ENCODE measurements at regions of chr22 and their contacts with region 1.

Region 1: DNA sequence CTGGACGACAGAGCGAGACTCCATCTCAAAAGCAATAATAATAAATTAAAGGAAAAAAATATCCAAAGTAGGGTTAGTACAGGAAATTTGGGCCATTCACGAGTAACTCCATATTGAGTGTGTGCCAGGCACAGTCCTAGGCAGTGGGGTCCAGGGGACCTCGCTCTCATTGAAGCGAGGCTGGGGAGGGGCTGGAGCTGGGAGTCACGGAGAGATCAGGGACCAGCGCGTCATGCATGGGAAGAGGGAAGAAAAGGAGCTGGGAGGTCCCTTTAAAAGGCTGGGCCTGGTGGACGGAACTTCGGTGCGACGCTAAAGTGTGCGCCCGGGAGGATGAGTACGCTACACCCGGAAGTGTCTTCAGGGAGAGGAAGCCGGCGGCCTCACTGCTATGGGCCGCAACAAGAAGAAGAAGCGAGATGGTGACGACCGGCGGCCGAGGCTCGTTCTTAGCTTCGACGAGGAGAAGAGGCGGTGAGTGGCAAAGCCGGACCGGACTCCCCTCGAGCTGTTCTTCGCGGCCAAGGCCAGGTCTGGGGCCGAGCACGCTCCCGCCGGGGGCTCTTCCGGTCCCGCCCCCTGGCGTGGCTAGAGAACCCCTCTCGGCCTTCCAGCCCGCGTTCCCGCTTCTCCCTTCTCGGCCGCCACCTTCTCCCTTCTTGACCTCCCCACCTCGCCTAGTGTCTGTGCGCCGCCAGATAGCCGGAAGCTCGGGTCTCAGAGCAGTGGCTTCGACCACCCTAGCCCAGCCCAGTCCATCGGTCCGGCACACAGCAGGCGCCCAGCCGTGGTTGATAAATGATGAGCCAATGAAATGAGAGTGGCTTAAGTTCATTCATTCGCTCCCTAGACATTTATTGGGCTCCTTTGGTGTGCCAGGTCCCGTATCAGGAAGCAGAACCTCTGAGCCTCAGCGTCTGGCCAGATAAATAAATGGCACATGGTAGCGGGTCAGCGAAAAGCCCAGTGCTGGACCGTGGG is at the start of gene NOL12:
- H3K4me3 ChIP-seq: peak within 1 kb of the TSS; percentile 77
- H3K27ac ChIP-seq: peak within 1 kb of the TSS; percentile 81
- H3K4me1 ChIP-seq: peaks cover 2% of the 10 kb centered on the region; the same call in 1 of the 2 replicates
- CTCF ChIP-seq: peak; percentile 12; the same call in 1 of the 2 replicates

Region 2: DNA sequence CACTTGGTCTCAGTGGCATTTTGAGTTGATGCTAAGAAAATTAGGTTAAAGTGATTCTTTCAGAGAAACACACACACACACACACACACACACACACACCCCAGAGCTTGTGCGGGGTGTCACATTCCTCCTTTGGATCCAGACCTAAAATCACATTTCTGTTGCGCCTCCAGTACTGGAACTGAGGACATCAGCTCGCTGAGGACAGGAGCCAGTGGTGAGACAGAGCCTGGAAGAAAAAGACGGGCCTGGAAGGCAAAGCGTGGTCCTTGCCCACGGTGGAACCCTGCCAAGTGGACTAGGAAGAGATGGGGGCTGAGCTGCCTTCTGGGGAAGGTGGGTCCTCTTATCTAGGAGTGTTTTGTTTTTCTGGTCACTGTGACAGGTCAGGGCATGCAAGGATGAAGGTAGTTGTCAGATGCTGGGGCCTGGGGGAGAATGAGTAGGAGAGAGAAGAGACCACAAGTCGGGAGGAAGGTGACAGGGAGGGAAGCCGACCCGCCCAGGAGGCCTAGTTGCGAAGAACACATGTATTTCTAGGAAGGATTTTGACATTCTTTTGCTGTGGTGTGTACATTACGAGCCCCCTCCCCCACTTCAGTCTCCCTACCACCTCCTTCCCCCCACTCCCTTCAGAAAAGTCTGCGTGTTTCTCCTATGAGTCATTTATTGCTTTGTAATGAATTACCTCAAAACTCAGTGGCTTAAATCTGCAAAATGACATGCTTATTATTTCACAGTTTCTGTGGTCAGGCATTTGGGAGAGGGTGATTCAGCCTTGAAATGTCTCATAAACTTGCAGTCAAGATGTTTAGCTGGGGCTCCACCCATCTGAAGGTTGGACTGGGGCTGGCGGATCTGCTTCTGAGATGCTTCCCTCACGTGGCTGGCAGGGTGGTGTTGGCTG is 254.2 kb before region 1 on chr22:
- CTCF ChIA-PET with region 1: no interaction called
- POLR2A ChIA-PET with region 1: no interaction called
- H3K4me3 ChIP-seq: no peak overlapping the region
- H3K27ac ChIP-seq: peak overlapping the region; percentile 10
- H3K4me1 ChIP-seq: no peaks in the 10 kb centered on the region
- CTCF ChIP-seq: no peak

Region 3: GRCh38 chr22:37633625-37634416 is 52.5 kb before region 1 on chr22:
- CTCF ChIA-PET with region 1: interaction called, 353 read pairs
- POLR2A ChIA-PET with region 1: interaction called, 3 read pairs
- H3K4me3 ChIP-seq: no peak overlapping the region
- H3K27ac ChIP-seq: peak overlapping the region; percentile 7; the same call in 1 of the 2 replicates
- H3K4me1 ChIP-seq: peaks cover 13% of the 10 kb centered on the region
- CTCF ChIP-seq: peak; percentile 61

Region 4: GRCh38 chr22:37696657-37697537 is 10.6 kb after region 1 on chr22 and contains the start of gene TRIOBP:
- CTCF ChIA-PET with region 1: interaction called, 13 read pairs
- POLR2A ChIA-PET with region 1: interaction called, 11 read pairs
- H3K4me3 ChIP-seq: no peak within 1 kb of the TSS
- H3K27ac ChIP-seq: no peak within 1 kb of the TSS
- H3K4me1 ChIP-seq: peaks cover 6% of the 10 kb centered on the region
- CTCF ChIP-seq: peak; percentile 73

Region 5: GRCh38 chr22:37764622-37765021 is 78.3 kb after region 1 on chr22:
- CTCF ChIA-PET with region 1: no interaction called
- POLR2A ChIA-PET with region 1: no interaction called
- H3K4me3 ChIP-seq: no peak overlapping the region
- H3K27ac ChIP-seq: no peak overlapping the region
- H3K4me1 ChIP-seq: peaks cover 6% of the 10 kb centered on the region; the same call in 1 of the 2 replicates
- CTCF ChIP-seq: no peak

Measured in HEK293 (cell line).